A673 (cell line): ENCODE measurements at regions of chr13 and their contacts with region 1.

Region 1: GRCh38 chr13:102825921-102826706 is 19.7 kb upstream of the ERCC5 start:
- DNase-seq: peak; percentile 91
- H3K4me3 ChIP-seq: peak overlapping the region; percentile 17
- H3K27ac ChIP-seq: peak overlapping the region; percentile 77
- H3K4me1 ChIP-seq: peaks cover 19% of the 10 kb centered on the region
- H3K27me3 ChIP-seq: no peaks in the 10 kb centered on the region
- CTCF ChIP-seq: no peak

Region 2: GRCh38 chr13:102798581-102799425 is 27.3 kb before region 1 on chr13 and contains the starts of genes BIVM and POGLUT2:
- CTCF ChIA-PET with region 1: no interaction called
- POLR2A ChIA-PET with region 1: no interaction called
- intact Hi-C with region 1: loop called (anchors 2 kb)
- DNase-seq: peak; percentile 97
- H3K4me3 ChIP-seq: peak within 1 kb of the TSS; percentile 75
- H3K27ac ChIP-seq: peak within 1 kb of the TSS; percentile 84
- H3K4me1 ChIP-seq: peaks cover 16% of the 10 kb centered on the region
- H3K27me3 ChIP-seq: no peaks in the 10 kb centered on the region
- CTCF ChIP-seq: no peak
- total RNA-seq, gene BIVM: 19.5 and 21.9 TPM in 2 replicates
- total RNA-seq, gene POGLUT2: 10.8 and 12.0 TPM in 2 replicates

Region 3: GRCh38 chr13:102978168-102978567 is 152.1 kb after region 1 on chr13:
- CTCF ChIA-PET with region 1: no interaction called
- POLR2A ChIA-PET with region 1: no interaction called
- intact Hi-C with region 1: no loop called
- DNase-seq: no peak
- H3K4me3 ChIP-seq: no peak overlapping the region
- H3K27ac ChIP-seq: no peak overlapping the region
- H3K4me1 ChIP-seq: no peaks in the 10 kb centered on the region
- H3K27me3 ChIP-seq: peaks cover 40% of the 10 kb centered on the region
- CTCF ChIP-seq: no peak

Region 4: DNA sequence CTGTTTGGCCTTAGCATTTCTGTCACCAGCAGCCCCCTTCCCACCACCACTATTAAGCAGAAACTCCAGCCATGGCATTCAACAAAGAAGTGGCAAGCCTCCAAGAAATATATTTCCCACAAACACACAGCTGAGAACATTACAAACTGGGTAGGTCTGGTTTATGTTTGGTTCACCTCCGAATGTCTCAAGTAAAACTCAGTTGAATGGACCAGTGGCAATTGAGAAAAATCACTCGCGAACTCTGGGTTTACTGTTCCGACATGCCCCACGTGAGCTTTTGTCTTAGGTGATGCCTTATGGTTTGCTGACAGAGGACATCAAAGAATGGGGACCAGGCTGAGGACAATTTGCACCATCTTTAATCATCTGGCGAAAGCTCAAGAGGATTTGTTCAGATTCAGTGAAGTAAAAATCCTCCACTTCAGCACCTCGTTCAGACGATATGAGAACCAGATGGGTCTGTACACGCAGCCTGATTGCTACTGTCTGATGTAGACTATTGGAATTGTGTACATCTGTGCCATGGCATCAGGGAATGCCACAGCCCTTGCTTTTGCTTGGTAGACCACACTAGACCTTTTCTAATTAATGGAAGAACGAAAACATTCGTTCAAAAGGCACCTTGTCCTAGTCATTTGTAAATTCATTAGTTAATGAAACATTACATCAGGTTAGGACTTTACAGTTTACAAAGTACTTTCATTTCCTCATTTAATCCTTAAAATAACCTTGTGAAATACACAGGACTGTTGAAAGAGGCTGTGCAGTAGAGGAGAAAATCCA is 180.7 kb after region 1 on chr13:
- CTCF ChIA-PET with region 1: no interaction called
- POLR2A ChIA-PET with region 1: no interaction called
- intact Hi-C with region 1: no loop called
- DNase-seq: no peak
- H3K4me3 ChIP-seq: no peak overlapping the region
- H3K27ac ChIP-seq: no peak overlapping the region
- H3K4me1 ChIP-seq: no peaks in the 10 kb centered on the region
- H3K27me3 ChIP-seq: peaks cover 20% of the 10 kb centered on the region
- CTCF ChIP-seq: no peak